ENCODE measurements at regions of chr16 and their contacts with region 1.

Region 1: DNA sequence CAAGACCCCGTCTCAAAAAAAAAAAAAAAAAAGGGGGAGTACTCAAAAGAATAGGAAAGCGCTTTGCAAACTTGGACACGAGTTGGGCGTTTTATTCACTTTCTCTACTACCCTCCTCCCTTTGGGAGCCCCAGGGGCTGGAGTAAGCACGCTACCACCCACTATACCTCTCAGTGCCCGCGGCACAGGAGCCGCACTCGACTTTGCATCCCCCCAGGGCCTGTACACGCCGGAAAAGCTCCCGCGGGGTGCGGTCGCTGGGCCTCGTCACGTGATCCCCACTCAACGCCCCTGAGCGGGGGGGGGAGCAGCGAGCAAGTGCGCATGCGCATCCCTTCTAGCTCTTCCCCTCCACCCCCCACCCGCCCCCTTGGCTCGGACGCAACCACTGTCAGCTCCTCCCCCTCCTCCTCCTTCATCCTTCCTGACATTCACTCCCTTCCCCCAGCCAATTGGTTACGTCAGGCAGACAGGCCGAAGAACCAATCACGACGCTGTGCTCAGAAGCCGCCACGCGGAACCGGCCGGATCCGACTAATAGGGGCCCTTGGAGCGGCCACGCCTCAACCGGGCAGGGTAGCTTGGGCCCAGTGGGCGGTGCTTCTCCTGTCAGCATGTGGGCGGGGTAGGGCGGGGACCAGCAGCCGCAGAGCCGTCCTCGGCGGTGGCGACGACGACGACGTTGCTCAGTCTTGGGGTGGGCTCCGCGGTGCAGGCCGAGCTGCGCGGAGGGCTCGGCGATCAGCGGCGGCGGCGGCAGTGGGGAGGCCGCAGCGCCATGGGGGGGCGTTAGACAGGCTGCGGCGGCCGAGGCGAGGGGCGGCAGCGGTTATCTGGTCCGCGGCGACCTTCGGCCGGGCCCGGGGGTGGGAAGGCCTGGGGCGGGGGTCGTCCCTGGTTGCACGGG is at the start of gene HAPSTR1:
- DNase-seq: peak; percentile 98
- ATAC-seq: peak; percentile 95
- H3K4me3 ChIP-seq: peak within 1 kb of the TSS; percentile 92
- H3K27ac ChIP-seq: peak within 1 kb of the TSS; percentile 36
- H3K4me1 ChIP-seq: peaks cover 21% of the 10 kb centered on the region
- H3K27me3 ChIP-seq: no peaks in the 10 kb centered on the region
- CTCF ChIP-seq: no peak
- total RNA-seq, gene HAPSTR1: 24.4 and 28.6 TPM in 2 replicates

Region 2: GRCh38 chr16:8806272-8806983 is 284.8 kb before region 1 on chr16:
- CTCF ChIA-PET with region 1: no interaction called
- POLR2A ChIA-PET with region 1: interaction called, 11 read pairs
- intact Hi-C with region 1: no loop called
- DNase-seq: no peak
- ATAC-seq: no peak
- H3K4me3 ChIP-seq: no peak overlapping the region
- H3K27ac ChIP-seq: no peak overlapping the region
- H3K4me1 ChIP-seq: no peaks in the 10 kb centered on the region
- H3K27me3 ChIP-seq: no peaks in the 10 kb centered on the region
- CTCF ChIP-seq: no peak

Region 3: GRCh38 chr16:8855011-8855786 is 236.0 kb before region 1 on chr16:
- CTCF ChIA-PET with region 1: no interaction called
- POLR2A ChIA-PET with region 1: interaction called, 17 read pairs
- intact Hi-C with region 1: no loop called
- DNase-seq: no peak
- ATAC-seq: no peak
- H3K4me3 ChIP-seq: no peak overlapping the region
- H3K27ac ChIP-seq: no peak overlapping the region
- H3K4me1 ChIP-seq: peaks cover 8% of the 10 kb centered on the region
- H3K27me3 ChIP-seq: no peaks in the 10 kb centered on the region
- CTCF ChIP-seq: peak; percentile 42; the same call in 1 of the 2 replicates

Region 4: GRCh38 chr16:8963825-8964441 is 127.3 kb before region 1 on chr16 and contains the start of gene USP7:
- CTCF ChIA-PET with region 1: no interaction called
- POLR2A ChIA-PET with region 1: no interaction called
- intact Hi-C with region 1: loop called (anchors 2 kb)
- DNase-seq: peak; percentile 84
- ATAC-seq: peak; percentile 89
- H3K4me3 ChIP-seq: peak within 1 kb of the TSS; percentile 79
- H3K27ac ChIP-seq: no peak within 1 kb of the TSS
- H3K4me1 ChIP-seq: peaks cover 20% of the 10 kb centered on the region
- H3K27me3 ChIP-seq: no peaks in the 10 kb centered on the region
- CTCF ChIP-seq: no peak
- total RNA-seq, gene USP7: 52.8 and 73.8 TPM in 2 replicates

Region 5: DNA sequence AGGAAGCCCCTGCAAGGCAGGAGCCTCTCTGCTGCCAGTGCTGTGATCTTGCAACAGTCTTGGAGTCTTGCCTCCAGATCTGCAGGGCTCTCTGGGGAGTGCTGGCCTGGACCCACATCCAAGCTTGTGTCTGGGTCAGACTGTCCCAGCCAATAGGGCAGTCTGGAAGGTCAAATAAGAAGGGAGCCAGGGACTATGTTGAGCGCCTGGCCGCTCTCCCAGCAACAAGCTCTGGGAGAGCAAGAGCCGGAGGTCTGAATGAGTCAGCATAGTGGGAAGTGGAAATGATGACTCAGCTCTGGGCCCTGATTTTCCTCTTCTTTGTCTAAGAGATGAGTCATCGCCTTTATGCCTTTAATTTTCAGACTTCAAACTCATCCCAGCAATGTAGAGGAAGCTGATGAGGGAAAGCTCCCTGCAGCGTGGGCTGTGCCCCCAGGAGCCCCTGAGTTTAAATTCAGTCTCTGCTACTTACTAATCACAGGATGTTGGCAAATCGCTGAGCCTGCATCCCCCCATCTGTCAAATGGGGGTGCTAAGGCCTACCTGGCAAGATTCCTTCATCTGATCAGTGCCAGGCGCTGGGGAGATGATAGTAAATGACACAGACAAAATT is 43.4 kb before region 1 on chr16:
- CTCF ChIA-PET with region 1: interaction called, 11 read pairs
- POLR2A ChIA-PET with region 1: no interaction called
- intact Hi-C with region 1: loop called (anchors 5 kb)
- DNase-seq: peak; percentile 97
- ATAC-seq: peak; percentile 98
- H3K4me3 ChIP-seq: peak overlapping the region; percentile 19; the same call in 1 of the 2 replicates
- H3K27ac ChIP-seq: peak overlapping the region; percentile 84
- H3K4me1 ChIP-seq: peaks cover 14% of the 10 kb centered on the region
- H3K27me3 ChIP-seq: no peaks in the 10 kb centered on the region
- CTCF ChIP-seq: no peak

Region 6: GRCh38 chr16:9077091-9077809 is 14.0 kb before region 1 on chr16:
- CTCF ChIA-PET with region 1: no interaction called
- POLR2A ChIA-PET with region 1: interaction called, 15 read pairs
- intact Hi-C with region 1: no loop called
- DNase-seq: peak; percentile 64
- ATAC-seq: peak; percentile 73
- H3K4me3 ChIP-seq: no peak overlapping the region
- H3K27ac ChIP-seq: peak overlapping the region; percentile 41; the same call in 1 of the 2 replicates
- H3K4me1 ChIP-seq: peaks cover 31% of the 10 kb centered on the region
- H3K27me3 ChIP-seq: no peaks in the 10 kb centered on the region
- CTCF ChIP-seq: no peak

Region 7: GRCh38 chr16:9279291-9280068 is 188.3 kb after region 1 on chr16:
- CTCF ChIA-PET with region 1: no interaction called
- POLR2A ChIA-PET with region 1: no interaction called
- intact Hi-C with region 1: no loop called
- DNase-seq: no peak
- ATAC-seq: no peak
- H3K4me3 ChIP-seq: no peak overlapping the region
- H3K27ac ChIP-seq: no peak overlapping the region
- H3K4me1 ChIP-seq: no peaks in the 10 kb centered on the region
- H3K27me3 ChIP-seq: 0 out of 2 replicates have a peak, but pooled peaks cover 22% of the 10 kb centered on the region
- CTCF ChIP-seq: no peak

Measured in PC-3 (cell line).